CD8-positive, alpha-beta T cell (primary cell): ENCODE measurements at regions of chr6 and their contacts with region 1.

Region 1: DNA sequence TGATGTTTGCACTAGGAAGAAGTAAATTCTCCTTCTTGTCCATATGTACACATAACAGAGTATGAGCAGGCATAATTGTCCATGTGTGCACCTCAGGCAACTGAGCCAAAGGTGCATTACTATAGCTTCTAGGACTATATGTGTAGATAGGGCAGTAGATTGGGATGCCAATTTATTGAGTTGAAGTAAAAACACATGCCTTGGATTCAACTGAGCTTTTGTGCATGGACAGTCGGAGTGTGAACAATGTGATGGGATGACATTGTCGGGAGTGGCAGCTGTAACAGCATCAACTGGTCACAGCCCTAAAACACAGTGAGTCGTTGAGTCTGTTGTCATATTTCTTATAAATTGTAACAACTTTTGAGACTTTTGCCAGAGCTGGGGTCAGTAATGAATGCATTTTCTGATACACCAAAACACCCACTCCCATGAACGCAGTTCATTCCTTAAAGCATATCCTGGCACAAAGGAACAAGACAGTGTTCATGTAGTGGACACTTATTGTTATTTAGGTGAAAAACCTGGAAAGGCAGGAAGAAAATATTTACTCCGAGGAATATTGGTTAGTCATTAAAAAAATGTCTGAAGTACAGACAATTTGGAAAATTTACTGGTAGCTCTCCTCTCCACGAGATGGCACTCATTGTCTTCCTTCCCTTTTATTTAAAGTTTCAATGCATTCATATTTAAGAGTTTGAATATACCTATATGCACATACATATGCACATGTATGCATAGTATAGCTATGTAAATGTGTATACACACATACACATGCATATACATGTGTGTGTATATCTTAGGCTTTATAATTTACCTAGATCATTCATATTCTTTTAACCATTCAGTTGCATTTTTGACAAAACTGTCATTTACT is 302.0 kb upstream of the STXBP5 start:
- DNase-seq: peak in 2 of 9 experiments; percentile 3 to 9
- ATAC-seq: no peak
- H3K4me3 ChIP-seq: no peak overlapping the region
- H3K4me3 Mint-ChIP-seq: no peak overlapping the region
- H3K27ac ChIP-seq: no peak overlapping the region
- H3K27ac Mint-ChIP-seq: no peak overlapping the region
- H3K4me1 ChIP-seq: no peaks in the 10 kb centered on the region
- H3K4me1 Mint-ChIP-seq: no peaks in the 10 kb centered on the region
- H3K27me3 ChIP-seq: no peaks in the 10 kb centered on the region
- H3K27me3 Mint-ChIP-seq: no peaks in the 10 kb centered on the region
- CTCF ChIP-seq: no peak

Region 2: DNA sequence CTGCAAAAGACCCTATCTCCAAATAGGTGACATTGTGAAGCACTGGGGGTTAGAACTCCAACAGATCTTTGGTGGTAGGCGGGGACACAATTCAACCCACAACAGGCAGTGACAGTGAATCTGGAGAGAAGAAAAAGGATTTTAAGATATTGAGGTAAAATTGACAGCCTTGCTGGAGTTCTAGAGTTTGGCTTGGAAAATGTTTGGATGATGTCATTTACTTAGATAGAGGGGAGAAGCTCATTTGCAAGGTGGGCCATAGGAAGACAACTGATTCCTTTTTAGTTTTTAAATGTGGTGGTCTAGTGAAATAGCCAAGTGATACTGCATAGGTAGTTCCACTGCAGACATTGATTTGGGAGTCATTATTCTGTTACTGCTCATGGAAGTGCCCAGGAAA is 153.2 kb before region 1 on chr6:
- CTCF ChIA-PET with region 1: no interaction called
- POLR2A ChIA-PET with region 1: no interaction called
- intact Hi-C with region 1: no loop called
- DNase-seq: no peak
- ATAC-seq: no peak
- H3K4me3 ChIP-seq: no peak overlapping the region
- H3K4me3 Mint-ChIP-seq: no peak overlapping the region
- H3K27ac ChIP-seq: no peak overlapping the region
- H3K27ac Mint-ChIP-seq: no peak overlapping the region
- H3K4me1 ChIP-seq: no peaks in the 10 kb centered on the region
- H3K4me1 Mint-ChIP-seq: no peaks in the 10 kb centered on the region
- H3K27me3 ChIP-seq: no peaks in the 10 kb centered on the region
- H3K27me3 Mint-ChIP-seq: no peaks in the 10 kb centered on the region
- CTCF ChIP-seq: no peak

Region 3: DNA sequence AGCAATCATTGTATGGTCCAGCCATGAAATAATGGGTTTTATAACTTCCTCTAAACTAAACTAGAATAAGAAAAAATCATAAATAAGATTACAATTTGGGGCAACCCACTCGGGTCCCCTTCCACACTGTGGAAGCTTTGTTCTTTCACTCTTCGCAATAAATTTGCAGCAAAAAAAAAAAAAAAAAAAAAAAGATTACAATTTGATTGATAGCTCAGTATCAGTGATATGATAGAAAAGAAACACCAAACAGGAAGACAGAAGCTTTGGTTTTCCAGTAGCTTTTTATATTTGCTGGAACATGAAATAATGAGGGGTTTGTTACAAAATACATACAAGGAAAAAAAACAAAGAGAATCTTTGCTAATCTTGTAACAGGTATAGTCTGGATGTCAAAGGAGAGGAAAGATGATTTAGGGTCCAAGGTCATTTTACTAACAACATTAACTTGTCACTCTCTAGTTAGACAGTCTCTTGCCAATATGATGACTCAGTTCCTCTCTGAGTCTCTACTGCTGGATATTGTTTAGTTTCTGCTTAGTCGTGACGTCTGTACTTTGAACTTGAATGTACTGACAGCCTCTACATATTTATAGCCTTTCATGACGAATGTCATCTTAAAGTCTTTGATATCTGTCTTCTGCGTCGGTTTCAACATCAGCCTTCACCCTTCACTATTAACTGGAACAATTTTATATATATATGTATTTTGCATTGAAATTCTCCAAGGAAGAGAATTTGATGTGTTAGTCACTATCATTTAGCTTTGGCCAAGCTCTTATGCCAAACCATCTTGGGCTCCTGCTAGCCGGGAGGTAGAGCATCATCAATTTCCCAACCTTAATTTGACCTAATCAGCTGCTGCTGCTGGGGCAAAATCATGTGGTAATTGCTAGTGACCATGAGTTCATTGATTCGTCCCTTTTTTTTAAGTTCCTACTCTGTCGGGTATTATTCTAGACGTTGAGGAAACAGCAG is 88.9 kb after region 1 on chr6:
- CTCF ChIA-PET with region 1: no interaction called
- POLR2A ChIA-PET with region 1: no interaction called
- intact Hi-C with region 1: no loop called
- DNase-seq: no peak
- ATAC-seq: no peak
- H3K4me3 ChIP-seq: no peak overlapping the region
- H3K4me3 Mint-ChIP-seq: no peak overlapping the region
- H3K27ac ChIP-seq: no peak overlapping the region
- H3K27ac Mint-ChIP-seq: no peak overlapping the region
- H3K4me1 ChIP-seq: no peaks in the 10 kb centered on the region
- H3K4me1 Mint-ChIP-seq: no peaks in the 10 kb centered on the region
- H3K27me3 ChIP-seq: no peaks in the 10 kb centered on the region
- H3K27me3 Mint-ChIP-seq: no peaks in the 10 kb centered on the region
- CTCF ChIP-seq: no peak

Region 4: DNA sequence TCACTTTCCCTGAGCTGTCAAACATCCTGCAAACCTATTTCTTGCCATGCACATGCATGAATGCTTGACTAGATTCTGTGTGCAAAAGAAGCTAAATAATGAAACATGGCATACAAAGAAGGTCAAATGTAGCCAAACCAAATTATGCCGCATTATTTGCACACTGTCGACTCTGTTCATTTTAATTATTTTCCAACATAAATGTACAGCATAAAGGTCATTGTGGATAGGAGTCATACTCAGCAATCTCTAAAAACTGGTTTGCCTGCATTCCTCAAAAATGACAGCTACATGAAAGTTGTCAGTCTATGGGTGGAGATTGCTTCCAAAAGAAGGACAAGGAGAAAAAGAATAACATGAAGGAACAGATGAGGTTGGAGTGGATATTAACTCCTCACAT is 179.0 kb after region 1 on chr6:
- CTCF ChIA-PET with region 1: no interaction called
- POLR2A ChIA-PET with region 1: no interaction called
- intact Hi-C with region 1: no loop called
- DNase-seq: no peak
- ATAC-seq: no peak
- H3K4me3 ChIP-seq: no peak overlapping the region
- H3K4me3 Mint-ChIP-seq: no peak overlapping the region
- H3K27ac ChIP-seq: no peak overlapping the region
- H3K27ac Mint-ChIP-seq: no peak overlapping the region
- H3K4me1 ChIP-seq: no peaks in the 10 kb centered on the region
- H3K4me1 Mint-ChIP-seq: peaks cover 5% of the 10 kb centered on the region
- H3K27me3 ChIP-seq: no peaks in the 10 kb centered on the region
- H3K27me3 Mint-ChIP-seq: no peaks in the 10 kb centered on the region
- CTCF ChIP-seq: no peak

Region 5: DNA sequence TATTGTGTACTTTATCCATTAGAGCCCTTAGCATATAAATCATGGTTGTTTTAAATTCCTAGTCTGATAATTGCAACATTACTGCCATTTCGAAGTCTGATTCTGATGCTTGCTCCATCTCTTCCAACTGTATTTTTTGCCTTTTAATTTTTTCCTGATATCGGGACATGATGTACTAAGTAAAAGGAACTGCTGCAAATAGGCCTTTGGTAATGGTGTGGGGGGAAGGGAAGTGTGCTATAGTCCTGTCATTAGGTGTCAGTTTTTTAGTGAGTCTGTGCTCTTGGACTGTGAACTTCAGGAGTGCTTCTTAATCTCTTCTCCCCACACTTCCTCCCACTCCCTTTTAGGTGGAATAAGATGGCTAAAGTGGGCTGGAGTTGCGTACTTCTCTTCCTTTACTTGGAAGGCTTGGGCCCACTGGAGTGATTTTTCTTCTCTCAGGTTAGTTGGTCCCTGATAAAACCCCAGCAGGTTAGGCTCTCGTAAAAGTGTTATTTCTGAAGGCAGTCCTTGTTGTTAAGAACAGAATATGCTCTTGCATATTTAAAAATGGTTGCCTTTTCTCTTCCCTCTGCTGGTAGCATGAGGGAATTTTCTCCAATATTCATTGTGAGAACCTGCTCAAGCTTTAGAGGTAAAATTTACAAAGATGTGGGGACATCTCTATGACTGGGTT is 320.1 kb after region 1 on chr6:
- CTCF ChIA-PET with region 1: no interaction called
- POLR2A ChIA-PET with region 1: no interaction called
- intact Hi-C with region 1: loop called in 1 of 2 experiments (anchors 2 kb)
- DNase-seq: peak in 2 of 9 experiments; percentile 29 to 44
- ATAC-seq: peak; percentile 61
- H3K4me3 ChIP-seq: no peak overlapping the region
- H3K4me3 Mint-ChIP-seq: no peak overlapping the region
- H3K27ac ChIP-seq: no peak overlapping the region
- H3K27ac Mint-ChIP-seq: peak overlapping the region; percentile 62
- H3K4me1 ChIP-seq: peaks cover 11% of the 10 kb centered on the region
- H3K4me1 Mint-ChIP-seq: peaks cover 60% of the 10 kb centered on the region
- H3K27me3 ChIP-seq: no peaks in the 10 kb centered on the region
- H3K27me3 Mint-ChIP-seq: no peaks in the 10 kb centered on the region
- CTCF ChIP-seq: peak; percentile 58

Region 6: GRCh38 chr6:147285087-147285855 is 383.1 kb after region 1 on chr6:
- CTCF ChIA-PET with region 1: interaction called, 6 read pairs
- POLR2A ChIA-PET with region 1: no interaction called
- intact Hi-C with region 1: loop called in 1 of 2 experiments (anchors 1 kb)
- DNase-seq: peak in 2 of 9 experiments; percentile 38 to 57
- ATAC-seq: no peak
- H3K4me3 ChIP-seq: no peak overlapping the region
- H3K4me3 Mint-ChIP-seq: no peak overlapping the region
- H3K27ac ChIP-seq: no peak overlapping the region
- H3K27ac Mint-ChIP-seq: peak overlapping the region; percentile 60
- H3K4me1 ChIP-seq: no peaks in the 10 kb centered on the region
- H3K4me1 Mint-ChIP-seq: peaks cover 23% of the 10 kb centered on the region
- H3K27me3 ChIP-seq: no peaks in the 10 kb centered on the region
- H3K27me3 Mint-ChIP-seq: no peaks in the 10 kb centered on the region
- CTCF ChIP-seq: peak; percentile 59